K562 (cell line): ENCODE measurements at regions of chr7 and their contacts with region 1.

Region 1: GRCh38 chr7:149586646-149587332 is 89.2 kb upstream of the ZNF746 start:
- DNase-seq: no peak
- ATAC-seq: no peak
- H3K4me3 ChIP-seq: no peak overlapping the region
- H3K27ac ChIP-seq: no peak overlapping the region
- H3K4me1 ChIP-seq: no peaks in the 10 kb centered on the region
- H3K27me3 ChIP-seq: no peaks in the 10 kb centered on the region
- CTCF ChIP-seq: no peak
- EP300 ChIP-seq: no peak
- POLR2A ChIP-seq: no peak
- RAD21 ChIP-seq: no peak

Region 2: DNA sequence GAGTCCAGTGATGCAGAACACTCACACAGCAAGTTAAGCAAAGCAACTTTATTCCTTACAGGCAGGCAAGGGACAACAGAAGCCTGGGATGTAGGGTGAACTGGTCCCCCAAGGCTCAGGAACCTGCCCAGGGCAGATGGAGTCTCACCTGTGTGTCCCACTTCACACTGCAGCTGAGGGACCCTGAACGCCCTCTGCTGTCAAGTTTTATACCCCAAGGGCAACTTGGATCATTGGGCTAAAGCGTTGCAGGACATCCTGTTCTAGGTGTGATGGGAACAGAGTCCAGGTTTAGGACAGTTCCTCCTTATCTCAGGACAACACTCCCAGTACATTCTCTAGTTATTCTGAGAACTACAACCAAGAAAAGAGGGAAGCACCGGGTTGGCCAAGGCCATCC is 39.7 kb before region 1 on chr7:
- CTCF ChIA-PET with region 1: no interaction called
- POLR2A ChIA-PET with region 1: no interaction called
- in situ Hi-C with region 1: no loop called
- intact Hi-C with region 1: loop called (anchors 1 kb)
- DNase-seq: no peak
- ATAC-seq: peak; percentile 53
- H3K4me3 ChIP-seq: no peak overlapping the region
- H3K27ac ChIP-seq: no peak overlapping the region
- H3K4me1 ChIP-seq: no peaks in the 10 kb centered on the region
- H3K27me3 ChIP-seq: no peaks in the 10 kb centered on the region; a peak in 1 of 5 replicates
- CTCF ChIP-seq: peak in 2 of 3 experiments; percentile 19 to 20; a peak in 1 of 6 replicates
- EP300 ChIP-seq: no peak
- POLR2A ChIP-seq: no peak
- RAD21 ChIP-seq: no peak

Region 3: DNA sequence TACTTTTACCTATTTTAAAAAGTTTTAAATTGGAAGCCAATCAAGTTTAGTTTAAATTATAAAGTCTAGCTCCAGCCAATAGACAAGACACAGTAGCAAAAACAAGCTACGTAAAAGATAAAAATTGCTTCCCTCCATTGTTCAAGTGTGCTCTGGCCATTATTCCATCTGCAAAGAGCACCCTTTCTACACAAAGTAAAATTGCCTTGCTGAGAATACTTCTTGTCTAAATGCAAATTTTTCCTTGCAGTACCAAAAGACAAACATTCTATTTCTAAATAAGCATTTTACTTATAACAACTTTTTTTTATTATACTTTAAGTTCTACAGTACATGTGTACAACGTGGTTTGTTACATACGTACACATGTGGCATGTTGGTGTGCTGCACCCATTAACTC is 13.3 kb before region 1 on chr7:
- CTCF ChIA-PET with region 1: no interaction called
- POLR2A ChIA-PET with region 1: no interaction called
- in situ Hi-C with region 1: no loop called
- intact Hi-C with region 1: no loop called
- DNase-seq: no peak
- ATAC-seq: no peak
- H3K4me3 ChIP-seq: no peak overlapping the region
- H3K27ac ChIP-seq: no peak overlapping the region
- H3K4me1 ChIP-seq: no peaks in the 10 kb centered on the region
- H3K27me3 ChIP-seq: no peaks in the 10 kb centered on the region
- CTCF ChIP-seq: no peak
- EP300 ChIP-seq: no peak
- POLR2A ChIP-seq: no peak
- RAD21 ChIP-seq: no peak